Mammary epithelial cell (primary cell): ENCODE measurements at regions of chr3 and their contacts with region 1.

Region 1: GRCh38 chr3:123884203-123884831 is at the start of gene MYLK:
- DNase-seq: peak; percentile 85
- H3K4me3 ChIP-seq: peak within 1 kb of the TSS; percentile 60 to 77 (median 63)
- H3K27ac ChIP-seq: peak within 1 kb of the TSS; percentile 16
- H3K4me1 ChIP-seq: peaks cover 11% of the 10 kb centered on the region
- H3K27me3 ChIP-seq: no peaks in the 10 kb centered on the region
- CTCF ChIP-seq: no peak
- total RNA-seq, gene MYLK: 103 to 1,758 TPM

Region 2: DNA sequence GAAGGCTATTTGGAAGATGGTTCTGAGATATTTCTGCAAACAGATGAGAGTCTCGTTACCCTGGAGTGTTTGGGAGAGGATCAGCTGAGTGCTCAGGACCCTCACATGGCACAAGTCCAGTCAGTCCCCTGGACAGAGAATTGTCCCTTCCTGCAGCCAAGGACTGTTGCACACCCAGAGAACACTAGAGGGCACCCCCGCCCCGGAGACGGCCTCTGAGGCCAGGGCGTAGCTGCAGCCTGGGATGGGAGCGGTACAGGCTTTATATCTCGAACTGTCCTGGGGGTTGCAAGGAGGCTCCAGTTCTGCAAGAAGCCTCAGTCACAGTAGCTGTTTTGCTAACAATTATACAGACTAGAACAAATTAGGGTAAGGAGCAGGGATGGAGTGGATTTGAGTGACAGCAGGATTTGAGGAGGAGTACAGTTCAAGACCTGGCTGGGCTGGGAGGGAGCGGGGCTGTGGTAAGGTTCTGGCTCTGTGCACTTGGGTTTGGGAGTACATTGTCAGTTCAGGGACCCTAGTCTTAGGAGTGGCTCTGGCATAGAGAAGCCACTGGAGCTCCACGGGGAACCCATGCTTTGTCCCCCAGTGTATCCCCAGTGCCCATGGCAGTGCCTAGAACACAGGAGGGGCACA is 231.9 kb before region 1 on chr3:
- CTCF ChIA-PET with region 1: no interaction called
- dilution Hi-C with region 1: no loop called
- in situ Hi-C with region 1: no loop called
- intact Hi-C with region 1: loop called (anchors 5 kb)
- DNase-seq: peak; percentile 35
- H3K4me3 ChIP-seq: no peak overlapping the region
- H3K27ac ChIP-seq: no peak overlapping the region
- H3K4me1 ChIP-seq: peaks cover 14% of the 10 kb centered on the region
- H3K27me3 ChIP-seq: no peaks in the 10 kb centered on the region
- CTCF ChIP-seq: peak; percentile 73 to 90

Region 3: DNA sequence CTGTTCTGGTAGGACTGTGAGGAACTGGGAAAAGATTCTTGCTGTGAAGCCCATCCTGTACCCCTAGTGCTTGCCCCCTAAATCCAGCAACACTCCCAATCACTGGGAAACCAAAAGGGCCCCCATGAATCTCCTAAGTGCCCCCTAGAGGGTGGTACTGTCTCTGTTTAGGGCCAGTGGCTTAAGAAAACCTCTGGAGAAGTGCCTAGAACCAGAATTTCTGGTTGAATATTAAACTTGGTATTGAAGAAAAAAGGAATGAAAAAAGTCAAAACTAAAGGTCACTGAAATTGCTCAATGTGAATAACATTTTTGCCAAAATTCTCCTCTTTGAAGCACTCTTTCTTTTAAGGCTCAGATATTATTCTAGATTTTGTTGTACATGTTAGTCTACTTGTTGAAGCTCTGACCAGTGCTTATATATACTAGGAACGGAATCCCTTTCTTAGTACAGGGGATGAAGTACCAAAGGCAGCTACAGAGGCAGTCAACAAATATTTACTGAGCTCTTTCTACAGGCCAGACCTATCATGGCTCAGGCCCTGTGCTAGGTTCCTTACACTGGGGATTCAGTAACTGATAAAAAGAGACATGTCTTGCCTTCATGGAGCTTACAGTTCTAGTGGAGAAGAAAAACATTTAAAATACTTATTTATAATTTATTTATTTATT is 139.0 kb before region 1 on chr3:
- CTCF ChIA-PET with region 1: no interaction called
- dilution Hi-C with region 1: no loop called
- in situ Hi-C with region 1: no loop called
- intact Hi-C with region 1: loop called (anchors 5 kb)
- DNase-seq: no peak
- H3K4me3 ChIP-seq: no peak overlapping the region
- H3K27ac ChIP-seq: no peak overlapping the region
- H3K4me1 ChIP-seq: peaks cover 28% of the 10 kb centered on the region
- H3K27me3 ChIP-seq: no peaks in the 10 kb centered on the region
- CTCF ChIP-seq: peak; percentile 16 to 31

Region 4: DNA sequence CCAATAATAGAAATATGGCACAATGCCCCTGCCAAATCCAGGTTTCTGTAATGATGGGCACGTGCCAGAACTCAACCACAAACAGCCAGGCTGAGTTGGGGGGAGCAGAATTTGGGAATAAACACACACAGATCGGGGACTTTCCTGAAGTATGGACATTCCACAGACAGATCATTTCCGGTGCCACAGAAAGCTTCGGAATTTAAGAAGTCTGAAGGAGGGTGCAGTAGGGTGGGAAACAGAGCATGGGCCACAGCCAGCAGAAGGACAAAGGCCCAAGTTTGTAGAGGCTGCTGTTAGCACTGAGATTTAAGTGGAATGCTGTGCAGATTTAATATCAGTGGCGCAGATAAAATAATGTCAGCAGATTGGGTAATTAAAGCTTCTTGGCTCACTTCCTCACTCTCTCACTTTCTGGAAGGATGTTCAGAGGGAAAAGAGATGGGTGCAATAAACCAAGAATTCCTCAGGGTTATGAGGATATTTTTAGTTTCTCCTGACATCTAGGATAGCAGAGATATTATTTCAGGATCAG is 67.6 kb before region 1 on chr3:
- CTCF ChIA-PET with region 1: no interaction called
- dilution Hi-C with region 1: no loop called
- in situ Hi-C with region 1: no loop called
- intact Hi-C with region 1: loop called (anchors 5 kb)
- DNase-seq: no peak
- H3K4me3 ChIP-seq: no peak overlapping the region
- H3K27ac ChIP-seq: peak overlapping the region; percentile 69
- H3K4me1 ChIP-seq: peaks cover 74% of the 10 kb centered on the region
- H3K27me3 ChIP-seq: no peaks in the 10 kb centered on the region
- CTCF ChIP-seq: no peak

Region 5: DNA sequence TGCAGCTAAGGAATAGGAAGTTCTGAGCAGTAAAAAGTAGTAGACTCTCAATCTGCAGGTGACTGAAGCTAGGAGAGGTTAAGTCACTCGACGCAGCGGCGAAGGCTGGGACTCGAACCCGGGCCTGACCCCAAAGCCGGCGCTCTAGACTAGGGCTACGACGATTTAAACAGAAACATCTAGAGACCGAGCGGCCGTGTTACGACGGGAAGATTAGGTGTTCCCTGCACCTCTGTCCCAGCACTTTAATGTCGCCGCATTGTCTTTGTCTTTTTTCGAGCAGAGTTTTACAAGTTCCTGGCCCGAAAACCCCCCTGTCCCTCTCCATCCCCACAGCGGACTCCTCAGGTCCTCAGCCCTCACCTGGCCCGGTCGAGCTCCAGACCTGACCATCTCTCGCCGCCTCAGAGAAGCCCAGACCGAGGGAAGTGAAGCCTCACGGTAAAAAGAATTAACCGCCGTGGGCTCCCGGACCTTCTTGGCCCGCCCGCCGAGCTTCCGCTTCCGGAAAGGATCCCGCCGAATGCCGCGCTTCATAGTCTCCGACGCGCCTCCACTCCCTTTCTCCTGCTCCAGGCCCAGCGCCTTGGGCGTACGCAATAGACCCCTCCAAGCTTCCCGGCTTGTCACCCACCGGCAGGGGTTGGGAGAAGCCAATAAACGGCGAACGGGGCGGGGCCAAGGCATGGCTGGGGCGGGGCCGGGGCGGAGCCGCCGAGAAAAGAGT is 76.6 kb after region 1 on chr3 and contains the start of gene CCDC14:
- CTCF ChIA-PET with region 1: interaction called, 13 read pairs
- dilution Hi-C with region 1: no loop called
- in situ Hi-C with region 1: no loop called
- intact Hi-C with region 1: no loop called
- DNase-seq: peak; percentile 93
- H3K4me3 ChIP-seq: peak within 1 kb of the TSS; percentile 83 to 91 (median 84)
- H3K27ac ChIP-seq: peak within 1 kb of the TSS; percentile 85
- H3K4me1 ChIP-seq: peaks cover 6% of the 10 kb centered on the region
- H3K27me3 ChIP-seq: no peaks in the 10 kb centered on the region
- CTCF ChIP-seq: no peak
- total RNA-seq, gene CCDC14: 34.1 to 39.7 TPM